Activated CD4-positive, alpha-beta memory T cell treated with anti-CD3 and anti-CD28 coated beads for 36 hours (primary cell): ENCODE measurements at regions of chr17 and their contacts with region 1.

Region 1: GRCh38 chr17:9924735-9925191 is 19.7 kb upstream of the RCVRN start:
- DNase-seq: no peak
- H3K4me3 Mint-ChIP-seq: no peak overlapping the region
- H3K27ac Mint-ChIP-seq: no peak overlapping the region
- H3K4me1 Mint-ChIP-seq: no peaks in the 10 kb centered on the region
- H3K27me3 Mint-ChIP-seq: no peaks in the 10 kb centered on the region

Region 2: DNA sequence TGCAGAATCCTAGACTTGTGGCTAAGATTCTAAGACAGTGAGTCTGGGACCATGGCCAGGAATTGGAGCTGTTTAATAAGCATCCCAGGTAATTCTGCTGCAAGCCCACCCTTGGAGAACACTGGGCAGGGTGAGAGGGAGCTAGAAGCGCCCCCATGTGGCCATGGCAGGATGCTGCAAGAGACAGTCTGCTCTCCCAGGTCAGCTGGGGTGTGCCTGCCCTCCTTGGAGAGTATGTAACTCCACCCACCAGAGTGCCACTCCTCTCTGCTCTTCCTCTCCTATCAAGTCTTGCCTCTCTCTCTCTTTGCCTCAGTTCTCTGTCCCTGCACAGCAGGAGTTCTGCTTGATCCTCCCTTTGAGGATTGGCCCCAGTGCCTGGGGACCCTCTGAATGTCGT is 34.6 kb before region 1 on chr17:
- CTCF ChIA-PET with region 1: no interaction called
- POLR2A ChIA-PET with region 1: no interaction called
- intact Hi-C with region 1: no loop called
- DNase-seq: peak; percentile 30
- H3K4me3 Mint-ChIP-seq: no peak overlapping the region
- H3K27ac Mint-ChIP-seq: no peak overlapping the region
- H3K4me1 Mint-ChIP-seq: no peaks in the 10 kb centered on the region
- H3K27me3 Mint-ChIP-seq: peaks cover 10% of the 10 kb centered on the region

Region 3: DNA sequence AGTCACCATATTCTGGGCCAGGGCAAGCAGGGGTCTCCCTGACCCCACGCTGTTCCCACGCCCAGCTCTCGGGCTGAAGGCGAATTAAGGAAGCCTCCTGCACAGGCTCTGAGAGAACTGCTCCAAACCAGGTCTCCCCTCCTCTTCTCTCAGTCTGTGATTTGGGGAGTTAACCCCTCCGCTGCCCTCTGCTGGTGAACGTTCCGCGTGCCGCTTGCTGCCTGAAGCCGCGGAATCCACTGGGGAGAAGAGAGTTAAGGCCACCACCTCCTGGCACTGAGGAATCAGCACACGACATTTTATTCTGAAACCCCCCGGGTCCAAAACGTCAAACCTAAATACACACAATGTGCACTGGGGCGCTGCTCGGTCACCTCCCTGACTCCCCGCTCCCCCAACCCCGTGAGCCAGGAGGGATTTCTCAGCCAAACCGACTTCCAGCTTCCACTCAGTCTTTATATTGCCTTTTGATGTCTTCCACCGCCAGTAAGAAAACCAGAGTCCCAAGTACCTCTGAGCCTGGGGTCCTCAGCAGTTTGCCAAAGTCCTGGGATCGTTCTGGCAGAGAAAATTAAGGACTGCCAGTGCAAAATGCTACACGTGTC is 34.7 kb after region 1 on chr17:
- CTCF ChIA-PET with region 1: interaction called, 10 read pairs
- POLR2A ChIA-PET with region 1: no interaction called
- intact Hi-C with region 1: loop called (anchors 1 kb)
- DNase-seq: peak; percentile 42
- H3K4me3 Mint-ChIP-seq: no peak overlapping the region
- H3K27ac Mint-ChIP-seq: no peak overlapping the region
- H3K4me1 Mint-ChIP-seq: no peaks in the 10 kb centered on the region
- H3K27me3 Mint-ChIP-seq: no peaks in the 10 kb centered on the region

Region 4: DNA sequence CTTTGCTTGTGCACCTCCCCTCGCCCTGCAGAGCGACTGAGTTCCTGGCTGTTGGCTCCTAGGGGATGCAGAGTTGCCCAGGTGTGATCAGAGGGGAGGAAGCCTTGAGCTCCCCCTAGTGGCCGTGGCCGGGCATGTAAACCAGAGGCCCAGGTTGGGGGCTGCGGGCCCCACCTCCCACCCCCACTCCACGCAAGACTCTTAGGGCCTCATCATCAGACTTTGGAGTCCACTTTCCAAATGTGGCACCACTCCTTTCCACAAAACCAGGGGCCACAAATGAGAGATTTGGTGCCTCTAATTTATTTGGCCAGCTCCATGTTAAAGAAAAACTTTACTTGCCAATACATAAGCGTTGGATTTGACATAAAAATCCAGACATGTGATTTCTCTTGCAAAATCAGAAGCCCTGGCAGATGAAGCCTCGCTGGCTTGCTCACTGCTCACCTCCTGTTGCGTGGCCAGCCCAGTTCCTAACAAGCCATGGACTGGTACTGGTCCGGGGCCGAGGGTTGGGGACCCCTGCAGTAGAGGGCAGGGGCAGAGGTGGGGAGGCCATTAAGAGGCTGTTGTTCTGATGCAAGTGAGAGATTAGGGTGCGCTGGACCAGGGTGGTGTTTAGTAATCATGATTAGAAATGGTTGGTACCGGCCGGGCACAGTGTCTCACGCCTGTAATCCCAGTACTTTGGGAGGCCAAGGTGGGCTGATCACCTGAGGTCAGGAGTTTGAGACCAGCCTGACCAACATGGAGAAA is 302.3 kb after region 1 on chr17:
- CTCF ChIA-PET with region 1: interaction called, 20 read pairs
- POLR2A ChIA-PET with region 1: no interaction called
- intact Hi-C with region 1: no loop called
- DNase-seq: peak; percentile 48
- H3K4me3 Mint-ChIP-seq: no peak overlapping the region
- H3K27ac Mint-ChIP-seq: no peak overlapping the region
- H3K4me1 Mint-ChIP-seq: no peaks in the 10 kb centered on the region
- H3K27me3 Mint-ChIP-seq: no peaks in the 10 kb centered on the region